ENCODE measurements at regions of chr10 and their contacts with region 1.

Region 1: GRCh38 chr10:78630944-78631838 is 437.6 kb upstream of the ZMIZ1 start:
- DNase-seq: no peak
- H3K4me3 ChIP-seq: no peak overlapping the region
- H3K27ac ChIP-seq: no peak overlapping the region
- H3K4me1 ChIP-seq: peaks cover 0 to 16% (median 2%) of the 10 kb centered on the region in 4 donors
- H3K27me3 ChIP-seq: no peaks in the 10 kb centered on the region
- CTCF ChIP-seq: no peak

Region 2: DNA sequence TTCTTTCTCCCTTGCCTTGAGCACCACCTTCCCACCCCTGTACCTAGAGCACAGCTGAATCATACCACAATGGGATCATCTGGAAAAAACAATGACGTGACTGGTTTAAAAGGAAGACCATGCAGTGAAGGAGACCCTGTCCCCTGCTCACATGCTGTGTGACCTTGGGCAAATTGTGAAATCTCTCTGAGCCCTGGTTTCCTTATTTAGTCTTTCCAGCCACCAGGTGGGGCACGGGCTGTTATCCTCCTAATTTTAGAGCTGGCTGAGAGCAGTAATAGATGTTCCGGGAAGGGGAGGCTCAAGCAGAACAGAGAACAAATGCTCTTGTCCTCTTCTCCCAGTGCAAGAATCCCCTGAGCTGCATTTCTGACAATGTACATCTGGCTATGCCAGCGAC is 399.3 kb before region 1 on chr10:
- intact Hi-C with region 1: no loop called
- DNase-seq: no peak
- H3K4me3 ChIP-seq: no peak overlapping the region
- H3K27ac ChIP-seq: no peak overlapping the region
- H3K4me1 ChIP-seq: no peaks in the 10 kb centered on the region
- H3K27me3 ChIP-seq: no peaks in the 10 kb centered on the region
- CTCF ChIP-seq: peak in 1 of 2 experiments; percentile 20

Region 3: GRCh38 chr10:78739444-78740053 is 108.4 kb after region 1 on chr10:
- intact Hi-C with region 1: loop called (anchors 1 kb)
- DNase-seq: no peak
- H3K4me3 ChIP-seq: no peak overlapping the region
- H3K27ac ChIP-seq: no peak overlapping the region
- H3K4me1 ChIP-seq: peaks cover 0 to 7% (median 0%) of the 10 kb centered on the region in 4 donors
- H3K27me3 ChIP-seq: no peaks in the 10 kb centered on the region
- CTCF ChIP-seq: no peak

Region 4: DNA sequence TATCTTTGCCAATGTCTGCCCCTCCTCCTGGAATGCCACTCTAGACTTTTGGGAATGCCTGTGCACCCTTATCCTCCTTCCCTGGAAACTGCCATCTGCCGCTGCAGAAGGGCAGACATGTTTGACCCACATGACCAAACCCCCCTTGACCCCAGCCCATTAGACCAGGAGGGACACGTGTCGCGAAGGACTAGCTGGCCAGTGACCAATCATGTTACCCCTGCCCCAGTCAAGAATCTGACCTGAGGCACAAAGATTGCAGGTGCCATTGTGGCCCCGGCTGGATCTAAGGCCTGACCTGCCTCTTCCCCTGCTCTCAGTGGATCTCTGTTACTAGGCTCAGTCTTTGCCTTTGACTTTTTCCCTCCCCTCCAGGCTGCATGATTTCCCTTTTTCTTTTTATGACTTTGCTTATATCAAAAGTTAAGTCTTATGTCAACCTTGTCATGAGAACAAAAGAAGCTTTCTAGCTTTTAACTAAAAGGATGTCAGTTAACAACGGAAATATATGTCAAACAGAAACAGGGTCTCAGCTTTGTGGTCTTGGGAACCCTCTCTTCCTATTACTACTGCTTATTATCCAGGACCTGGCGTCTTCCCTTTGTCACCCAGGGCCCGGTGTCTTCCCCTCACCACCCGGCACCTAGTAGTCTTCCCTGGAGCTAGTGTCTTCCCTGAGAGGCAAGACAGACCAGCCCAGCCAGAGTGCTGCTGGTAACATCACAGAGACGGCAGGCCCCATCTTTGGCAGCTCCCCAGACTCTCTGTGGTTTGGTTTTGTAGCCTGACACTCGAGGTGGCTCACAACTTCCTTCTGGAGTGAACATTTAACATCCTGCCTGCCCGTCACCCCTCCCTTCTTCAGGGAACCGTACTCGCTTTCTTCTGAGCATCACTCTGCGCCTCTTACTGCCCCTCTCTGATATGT is 691.7 kb after region 1 on chr10:
- intact Hi-C with region 1: no loop called
- DNase-seq: peak; percentile 75 to 76
- H3K4me3 ChIP-seq: no peak overlapping the region
- H3K27ac ChIP-seq: no peak overlapping the region
- H3K4me1 ChIP-seq: peaks cover 0 to 4% (median 1%) of the 10 kb centered on the region in 4 donors
- H3K27me3 ChIP-seq: no peaks in the 10 kb centered on the region
- CTCF ChIP-seq: no peak